ENCODE measurements at regions of chr3 and their contacts with region 1.

Region 1: GRCh38 chr3:99172736-99173657 is 271.5 kb upstream of the DCBLD2 start:
- DNase-seq: peak; percentile 36
- H3K4me3 ChIP-seq: no peak overlapping the region
- H3K27ac ChIP-seq: no peak overlapping the region
- H3K4me1 ChIP-seq: no peaks in the 10 kb centered on the region
- H3K27me3 ChIP-seq: no peaks in the 10 kb centered on the region
- CTCF ChIP-seq: peak; percentile 87
- EP300 ChIP-seq: no peak
- RAD21 ChIP-seq: peak; percentile 71

Region 2: GRCh38 chr3:98817547-98818041 is 355.4 kb before region 1 on chr3:
- CTCF ChIA-PET with region 1: interaction called, 16 read pairs
- POLR2A ChIA-PET with region 1: no interaction called
- DNase-seq: peak; percentile 39
- H3K4me3 ChIP-seq: no peak overlapping the region
- H3K27ac ChIP-seq: peak overlapping the region; percentile 40 to 59
- H3K4me1 ChIP-seq: peaks cover 10 to 22% of the 10 kb centered on the region in 2 experiments
- H3K27me3 ChIP-seq: no peaks in the 10 kb centered on the region
- CTCF ChIP-seq: peak; percentile 69
- EP300 ChIP-seq: no peak
- RAD21 ChIP-seq: peak; percentile 81

Region 3: GRCh38 chr3:98994128-98994762 is 178.8 kb before region 1 on chr3:
- CTCF ChIA-PET with region 1: no interaction called
- POLR2A ChIA-PET with region 1: no interaction called
- DNase-seq: peak; percentile 24
- H3K4me3 ChIP-seq: no peak overlapping the region
- H3K27ac ChIP-seq: peak overlapping the region in 1 of 2 experiments; percentile 5; a peak in 1 of 4 replicates
- H3K4me1 ChIP-seq: no peaks in the 10 kb centered on the region; a peak in 1 of 4 replicates
- H3K27me3 ChIP-seq: no peaks in the 10 kb centered on the region
- CTCF ChIP-seq: peak; percentile 85
- EP300 ChIP-seq: no peak
- RAD21 ChIP-seq: peak; percentile 96

Region 4: GRCh38 chr3:99012051-99012450 is 160.9 kb before region 1 on chr3:
- CTCF ChIA-PET with region 1: interaction called, 14 read pairs
- POLR2A ChIA-PET with region 1: no interaction called
- DNase-seq: no peak
- H3K4me3 ChIP-seq: no peak overlapping the region
- H3K27ac ChIP-seq: peak overlapping the region in 1 of 2 experiments; percentile 36; a peak in 1 of 4 replicates
- H3K4me1 ChIP-seq: peaks cover 0 to 5% of the 10 kb centered on the region in 2 experiments; a peak in 2 of 4 replicates
- H3K27me3 ChIP-seq: no peaks in the 10 kb centered on the region
- CTCF ChIP-seq: no peak
- EP300 ChIP-seq: no peak
- RAD21 ChIP-seq: no peak

Region 5: GRCh38 chr3:99023590-99024192 is 149.3 kb before region 1 on chr3:
- CTCF ChIA-PET with region 1: interaction called, 73 read pairs
- POLR2A ChIA-PET with region 1: no interaction called
- DNase-seq: peak; percentile 36
- H3K4me3 ChIP-seq: no peak overlapping the region
- H3K27ac ChIP-seq: no peak overlapping the region
- H3K4me1 ChIP-seq: no peaks in the 10 kb centered on the region
- H3K27me3 ChIP-seq: no peaks in the 10 kb centered on the region
- CTCF ChIP-seq: peak; percentile 81
- EP300 ChIP-seq: no peak
- RAD21 ChIP-seq: peak; percentile 85

Region 6: GRCh38 chr3:99186016-99186415 is 13.0 kb after region 1 on chr3:
- CTCF ChIA-PET with region 1: interaction called, 19 read pairs
- POLR2A ChIA-PET with region 1: no interaction called
- DNase-seq: no peak
- H3K4me3 ChIP-seq: no peak overlapping the region
- H3K27ac ChIP-seq: no peak overlapping the region
- H3K4me1 ChIP-seq: no peaks in the 10 kb centered on the region
- H3K27me3 ChIP-seq: no peaks in the 10 kb centered on the region
- CTCF ChIP-seq: no peak
- EP300 ChIP-seq: no peak
- RAD21 ChIP-seq: no peak

Region 7: DNA sequence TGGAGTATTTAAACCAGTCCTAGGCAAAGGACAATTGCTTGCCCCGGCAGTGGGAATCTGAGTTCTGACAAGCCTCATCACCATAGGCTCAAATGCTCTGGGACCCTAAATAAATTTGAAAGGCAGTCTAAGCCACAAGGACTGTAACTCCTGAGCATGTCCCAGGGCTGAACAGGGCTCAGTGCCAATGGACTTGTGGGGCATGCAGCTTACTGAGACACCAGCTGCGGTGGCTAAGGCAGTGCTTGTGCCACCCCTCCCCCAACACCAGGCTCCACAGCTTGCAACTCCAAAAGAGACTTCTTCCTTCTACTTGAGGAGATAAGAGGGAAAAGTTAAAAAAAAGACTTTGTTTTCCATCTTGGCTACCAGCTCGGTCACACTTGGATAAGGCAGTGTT is 18.2 kb after region 1 on chr3:
- CTCF ChIA-PET with region 1: interaction called, 19 read pairs
- POLR2A ChIA-PET with region 1: no interaction called
- DNase-seq: no peak
- H3K4me3 ChIP-seq: no peak overlapping the region
- H3K27ac ChIP-seq: no peak overlapping the region
- H3K4me1 ChIP-seq: no peaks in the 10 kb centered on the region
- H3K27me3 ChIP-seq: no peaks in the 10 kb centered on the region
- CTCF ChIP-seq: no peak
- EP300 ChIP-seq: no peak
- RAD21 ChIP-seq: no peak

Region 8: DNA sequence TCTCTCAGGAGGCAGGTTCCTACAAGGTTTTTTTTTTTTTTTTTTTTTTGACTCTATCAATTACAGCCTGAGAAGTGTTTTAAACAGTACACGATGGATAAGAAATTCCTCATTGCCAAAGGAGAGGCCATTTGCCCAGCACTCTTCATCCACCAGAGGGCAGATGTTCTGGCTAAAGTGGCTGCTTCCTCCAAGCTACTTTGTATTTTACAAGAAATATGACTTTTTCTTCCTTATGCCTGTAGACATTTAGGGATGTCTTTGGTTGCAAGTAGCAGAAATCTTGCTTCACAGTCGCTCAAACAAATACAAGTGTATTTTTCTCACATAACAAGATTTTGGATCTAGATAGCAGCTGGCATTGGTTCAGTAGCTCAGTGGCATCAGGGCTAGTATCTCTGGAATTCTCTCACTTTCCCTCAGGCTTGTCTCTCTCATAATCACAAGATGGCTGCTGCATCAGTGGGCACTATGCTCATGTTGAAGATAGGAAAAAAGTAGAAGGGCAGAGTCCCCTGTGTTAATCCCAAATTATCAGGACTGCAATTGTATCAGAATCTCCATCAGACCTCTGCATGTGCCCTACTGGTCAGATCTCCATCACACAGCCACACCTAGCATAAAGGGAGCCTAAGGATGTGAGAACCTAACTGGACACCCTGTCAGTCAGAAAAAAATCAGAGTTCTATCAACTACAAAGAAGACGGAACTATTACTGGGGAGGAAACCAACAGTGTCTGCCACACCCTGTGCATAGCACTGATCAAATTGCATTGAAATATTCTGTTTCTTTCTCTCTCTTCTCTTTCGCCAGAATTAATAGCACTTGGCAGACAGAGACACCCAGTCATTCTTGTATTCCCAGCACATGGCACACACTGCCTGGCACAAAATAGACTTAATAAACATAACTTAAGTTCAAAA is 326.5 kb after region 1 on chr3:
- CTCF ChIA-PET with region 1: no interaction called
- POLR2A ChIA-PET with region 1: no interaction called
- DNase-seq: peak; percentile 24
- H3K4me3 ChIP-seq: no peak overlapping the region; a peak in 1 of 4 replicates
- H3K27ac ChIP-seq: peak overlapping the region in 1 of 2 experiments; percentile 29; a peak in 1 of 4 replicates
- H3K4me1 ChIP-seq: no peaks in the 10 kb centered on the region
- H3K27me3 ChIP-seq: no peaks in the 10 kb centered on the region
- CTCF ChIP-seq: peak; percentile 83
- EP300 ChIP-seq: no peak
- RAD21 ChIP-seq: peak; percentile 59

Measured in SK-N-SH (cell line).